WTC11 (cell line): ENCODE measurements at regions of chr1 and their contacts with region 1.

Region 1: DNA sequence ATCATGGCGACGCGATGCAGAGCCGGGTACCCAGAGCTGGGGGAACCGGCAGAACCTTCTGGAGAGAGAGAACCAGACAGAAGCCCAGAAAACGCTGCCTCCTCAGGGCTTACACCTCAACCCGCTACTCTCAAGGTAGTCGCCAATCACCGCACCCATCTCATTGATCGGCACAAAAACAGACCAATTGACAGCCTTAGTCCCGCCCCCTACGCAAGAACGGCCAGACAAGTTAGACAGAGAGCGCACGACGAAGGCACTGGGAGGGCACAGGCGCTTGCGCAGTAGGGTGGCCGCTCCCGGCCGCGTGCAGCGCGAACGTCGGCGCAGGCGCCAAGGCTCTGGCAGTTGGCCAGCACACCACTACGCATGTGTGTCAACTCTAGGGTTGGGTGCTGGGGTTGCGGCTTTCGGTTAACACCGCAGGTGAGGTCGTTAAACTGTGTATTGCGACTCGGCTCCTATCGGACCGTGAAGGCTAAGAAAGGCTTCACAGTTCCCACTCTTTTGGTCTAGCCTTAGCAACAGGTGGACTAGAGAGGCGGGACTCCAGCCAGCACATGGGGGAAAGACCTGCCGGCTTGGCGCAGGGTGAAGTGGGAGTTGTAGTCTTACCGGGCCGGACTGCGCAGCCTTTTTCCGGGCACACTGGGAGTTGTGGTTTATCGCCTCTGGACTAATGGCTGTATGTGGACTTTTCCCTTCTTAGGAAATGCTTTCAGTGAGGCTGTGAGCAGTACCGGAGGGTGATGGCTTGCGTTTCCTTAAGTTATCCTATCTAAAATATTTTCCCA is at the starts of genes CCT3 and TSACC:
- DNase-seq: peak; percentile 98
- ATAC-seq: peak; percentile 97
- H3K4me3 Mint-ChIP-seq: peak within 1 kb of the TSS; percentile 99
- H3K27ac Mint-ChIP-seq: peak within 1 kb of the TSS; percentile 96
- H3K4me1 Mint-ChIP-seq: peaks cover 18% of the 10 kb centered on the region
- H3K27me3 Mint-ChIP-seq: no peaks in the 10 kb centered on the region
- CTCF ChIP-seq: no peak
- total RNA-seq, gene CCT3: 411 to 479 TPM (median 429 TPM) in 3 replicates
- total RNA-seq, gene TSACC: 1.8 to 2.7 TPM (median 2.2 TPM) in 3 replicates

Region 2: DNA sequence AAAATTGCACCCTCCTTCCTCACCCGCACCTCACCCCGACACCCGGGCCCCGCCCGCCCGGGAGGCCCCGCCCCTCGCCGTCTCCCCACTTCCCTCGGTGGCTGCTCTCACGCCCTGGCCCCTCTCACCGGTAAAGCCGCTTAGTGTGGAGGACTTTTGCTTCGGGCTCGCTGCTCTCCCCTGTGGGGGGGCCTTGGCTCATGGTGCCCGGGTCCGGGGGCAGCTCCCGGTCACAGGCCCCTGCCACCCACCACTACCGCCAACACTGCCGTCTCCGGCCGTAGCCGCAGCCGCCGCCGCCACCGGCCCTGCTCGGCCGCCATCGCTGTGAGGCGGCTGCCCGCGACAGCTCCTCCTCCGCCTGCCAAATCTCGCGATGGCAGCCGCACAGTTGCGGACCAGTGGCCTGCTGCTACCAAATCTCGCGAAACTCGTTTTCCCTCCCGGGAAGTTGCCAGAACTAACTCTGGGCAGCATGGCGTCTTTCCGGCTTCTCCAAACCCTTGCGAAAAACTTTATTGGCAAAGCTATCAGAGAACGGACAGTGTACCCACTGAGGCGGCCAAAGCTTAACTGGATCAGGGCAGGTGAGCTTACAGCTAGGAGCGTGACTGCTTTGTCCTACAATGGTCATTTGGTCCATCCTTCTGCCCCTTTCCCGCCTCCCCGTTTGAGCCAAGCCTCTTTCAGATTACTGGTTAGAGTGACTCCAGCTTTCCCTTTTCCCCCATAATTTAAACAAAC is 55.7 kb before region 1 on chr1 and contains the start of gene SMG5:
- CTCF ChIA-PET with region 1: interaction called, 5 read pairs
- POLR2A ChIA-PET with region 1: interaction called, 10 read pairs
- DNase-seq: peak; percentile 97
- ATAC-seq: peak; percentile 94
- H3K4me3 Mint-ChIP-seq: peak within 1 kb of the TSS; percentile 97
- H3K27ac Mint-ChIP-seq: peak within 1 kb of the TSS; percentile 97
- H3K4me1 Mint-ChIP-seq: peaks cover 24% of the 10 kb centered on the region
- H3K27me3 Mint-ChIP-seq: no peaks in the 10 kb centered on the region
- CTCF ChIP-seq: no peak
- total RNA-seq, gene SMG5: 87.7 to 109 TPM (median 91.1 TPM) in 3 replicates

Region 3: GRCh38 chr1:156319664-156320063 is 18.7 kb before region 1 on chr1:
- CTCF ChIA-PET with region 1: interaction called, 14 read pairs
- POLR2A ChIA-PET with region 1: no interaction called
- DNase-seq: no peak
- ATAC-seq: no peak
- H3K4me3 Mint-ChIP-seq: no peak overlapping the region
- H3K27ac Mint-ChIP-seq: no peak overlapping the region
- H3K4me1 Mint-ChIP-seq: no peaks in the 10 kb centered on the region
- H3K27me3 Mint-ChIP-seq: no peaks in the 10 kb centered on the region
- CTCF ChIP-seq: no peak

Region 4: DNA sequence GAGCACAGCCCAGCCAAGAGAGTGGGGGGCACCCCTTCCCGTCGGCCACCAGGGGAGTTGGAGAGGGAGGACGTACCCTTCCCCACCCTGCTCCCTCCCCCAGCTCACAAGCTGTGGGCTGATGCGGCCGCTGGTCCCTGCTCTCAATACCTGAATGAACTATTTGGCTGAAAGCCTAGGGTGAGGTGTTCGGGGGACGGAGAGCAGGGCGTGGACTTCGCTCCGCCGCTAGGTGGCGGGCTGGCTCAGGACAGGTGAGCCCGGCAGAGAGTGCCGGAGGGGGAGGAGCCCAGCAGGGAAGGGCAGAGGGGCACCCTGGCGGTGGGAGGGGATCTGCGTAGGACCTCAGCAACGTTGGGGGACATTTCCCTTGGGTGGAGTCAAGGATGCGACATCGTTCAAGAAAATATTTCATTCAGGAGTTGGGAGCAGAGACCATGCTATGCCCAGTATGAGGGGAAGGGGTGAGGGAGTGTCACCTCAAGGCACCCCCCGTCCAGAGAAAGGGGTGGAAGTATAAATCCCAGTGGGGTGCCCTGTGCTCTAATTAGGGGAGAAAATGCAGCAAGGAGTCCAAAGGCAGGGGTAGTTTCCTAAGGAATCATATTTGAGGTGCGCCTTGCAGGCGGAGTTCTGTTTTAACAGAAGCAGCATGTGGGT is 18.6 kb after region 1 on chr1:
- CTCF ChIA-PET with region 1: interaction called, 18 read pairs
- POLR2A ChIA-PET with region 1: no interaction called
- DNase-seq: peak; percentile 93
- ATAC-seq: peak; percentile 96
- H3K4me3 Mint-ChIP-seq: peak overlapping the region; percentile 79
- H3K27ac Mint-ChIP-seq: no peak overlapping the region
- H3K4me1 Mint-ChIP-seq: peaks cover 12% of the 10 kb centered on the region
- H3K27me3 Mint-ChIP-seq: peaks cover 24% of the 10 kb centered on the region
- CTCF ChIP-seq: peak; percentile 86

Region 5: DNA sequence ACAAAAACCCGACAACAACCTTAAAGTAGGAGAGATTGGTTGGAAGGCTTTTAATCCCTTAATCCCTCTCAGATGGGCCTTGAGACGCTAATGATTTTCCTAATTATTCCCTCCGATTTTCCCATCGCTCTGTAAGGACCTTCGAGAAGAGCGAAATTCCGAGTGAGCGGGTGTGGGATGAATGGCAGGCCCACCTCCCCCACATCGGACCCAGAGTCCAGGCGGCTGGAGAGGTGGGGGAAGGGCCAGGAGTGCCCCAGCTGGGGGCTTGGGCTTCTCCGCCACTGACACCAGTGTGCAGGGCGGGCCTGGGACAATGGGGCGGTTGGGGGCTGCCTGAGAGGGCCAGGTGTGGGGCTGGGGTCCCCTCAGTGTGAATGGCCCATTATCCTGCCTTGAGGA is 54.1 kb after region 1 on chr1:
- CTCF ChIA-PET with region 1: no interaction called
- POLR2A ChIA-PET with region 1: no interaction called
- DNase-seq: no peak
- ATAC-seq: no peak
- H3K4me3 Mint-ChIP-seq: no peak overlapping the region
- H3K27ac Mint-ChIP-seq: no peak overlapping the region
- H3K4me1 Mint-ChIP-seq: peaks cover 46% of the 10 kb centered on the region
- H3K27me3 Mint-ChIP-seq: peaks cover 40% of the 10 kb centered on the region
- CTCF ChIP-seq: no peak